ENCODE measurements at regions of chr15 and their contacts with region 1.

Region 1: GRCh38 chr15:91302588-91303439 is 202.8 kb downstream of the SV2B start:
- DNase-seq: no peak
- H3K4me3 Mint-ChIP-seq: no peak overlapping the region
- H3K27ac Mint-ChIP-seq: no peak overlapping the region
- H3K4me1 Mint-ChIP-seq: peaks cover 16% of the 10 kb centered on the region
- H3K27me3 Mint-ChIP-seq: peaks cover 48% of the 10 kb centered on the region

Region 2: GRCh38 chr15:91369823-91370222 is 67.0 kb after region 1 on chr15:
- intact Hi-C with region 1: no loop called
- DNase-seq: no peak
- H3K4me3 Mint-ChIP-seq: no peak overlapping the region
- H3K27ac Mint-ChIP-seq: no peak overlapping the region
- H3K4me1 Mint-ChIP-seq: peaks cover 5% of the 10 kb centered on the region
- H3K27me3 Mint-ChIP-seq: peaks cover 9% of the 10 kb centered on the region

Region 3: DNA sequence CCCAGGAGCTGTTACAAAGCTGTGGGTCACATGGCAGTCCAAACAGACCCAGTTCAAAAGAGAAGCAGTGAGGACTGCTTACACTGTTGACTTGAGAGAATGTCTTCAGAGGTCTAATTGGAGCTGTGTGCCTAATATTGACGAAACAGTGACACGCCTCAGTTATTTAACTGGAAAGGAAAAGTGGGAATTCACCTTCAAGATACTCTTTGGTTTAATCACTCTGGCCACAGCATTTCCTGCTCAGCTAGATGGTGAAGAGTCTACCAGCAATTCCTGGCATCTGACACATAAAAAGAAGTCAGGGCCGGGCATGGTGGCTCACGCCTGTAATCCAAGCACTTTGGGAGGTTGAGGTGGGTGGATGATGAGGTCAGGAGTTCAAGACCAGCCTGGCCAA is 123.6 kb after region 1 on chr15:
- intact Hi-C with region 1: loop called (anchors 10 kb)
- DNase-seq: no peak
- H3K4me3 Mint-ChIP-seq: no peak overlapping the region
- H3K27ac Mint-ChIP-seq: no peak overlapping the region
- H3K4me1 Mint-ChIP-seq: peaks cover 37% of the 10 kb centered on the region
- H3K27me3 Mint-ChIP-seq: no peaks in the 10 kb centered on the region

Region 4: DNA sequence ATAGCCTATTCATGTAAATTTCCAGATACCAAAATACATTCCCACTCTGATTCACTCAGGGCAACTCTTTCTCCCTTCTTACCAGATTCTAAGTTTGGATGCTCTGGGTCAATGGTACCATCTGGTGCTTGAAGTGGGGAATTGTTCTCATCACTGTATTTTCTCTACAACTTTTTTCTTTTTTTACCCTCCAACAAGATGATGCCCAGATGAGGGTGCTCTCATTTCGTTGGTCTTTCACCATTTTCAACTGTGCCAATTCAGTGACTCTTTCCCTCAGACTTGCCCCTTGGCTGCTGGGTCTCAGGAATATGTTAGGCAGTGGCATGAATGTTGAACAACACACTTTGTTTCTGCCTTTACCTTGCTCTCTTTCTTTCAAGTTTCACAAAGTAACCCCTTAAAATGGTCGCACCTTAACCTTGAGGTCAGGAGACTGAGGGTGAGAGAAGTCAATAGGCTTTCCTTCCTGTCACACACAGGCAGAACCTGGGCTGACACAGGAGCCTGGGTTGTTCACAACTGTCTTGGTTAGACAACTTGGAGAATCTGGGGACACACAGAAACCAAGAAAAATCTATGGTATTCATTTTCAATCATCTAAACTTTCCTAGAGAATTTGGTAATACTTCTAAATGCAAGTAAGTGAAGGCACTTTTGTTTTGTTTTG is 220.0 kb after region 1 on chr15:
- intact Hi-C with region 1: loop called (anchors 1 kb)
- DNase-seq: no peak
- H3K4me3 Mint-ChIP-seq: no peak overlapping the region
- H3K27ac Mint-ChIP-seq: no peak overlapping the region
- H3K4me1 Mint-ChIP-seq: peaks cover 21% of the 10 kb centered on the region
- H3K27me3 Mint-ChIP-seq: peaks cover 12% of the 10 kb centered on the region

Region 5: GRCh38 chr15:91706322-91707032 is 403.7 kb after region 1 on chr15:
- intact Hi-C with region 1: loop called (anchors 1 kb)
- DNase-seq: peak; percentile 84
- H3K4me3 Mint-ChIP-seq: peak overlapping the region; percentile 9
- H3K27ac Mint-ChIP-seq: peak overlapping the region; percentile 76
- H3K4me1 Mint-ChIP-seq: peaks cover 24% of the 10 kb centered on the region
- H3K27me3 Mint-ChIP-seq: peaks cover 22% of the 10 kb centered on the region

Region 6: GRCh38 chr15:91942676-91943576 is 640.1 kb after region 1 on chr15:
- intact Hi-C with region 1: loop called (anchors 2 kb)
- DNase-seq: peak; percentile 44
- H3K4me3 Mint-ChIP-seq: peak overlapping the region; percentile 42
- H3K27ac Mint-ChIP-seq: peak overlapping the region; percentile 84
- H3K4me1 Mint-ChIP-seq: peaks cover 40% of the 10 kb centered on the region
- H3K27me3 Mint-ChIP-seq: no peaks in the 10 kb centered on the region

Region 7: GRCh38 chr15:92077353-92078085 is 774.7 kb after region 1 on chr15:
- intact Hi-C with region 1: loop called (anchors 1 kb)
- DNase-seq: peak; percentile 41
- H3K4me3 Mint-ChIP-seq: no peak overlapping the region
- H3K27ac Mint-ChIP-seq: no peak overlapping the region
- H3K4me1 Mint-ChIP-seq: peaks cover 27% of the 10 kb centered on the region
- H3K27me3 Mint-ChIP-seq: no peaks in the 10 kb centered on the region